ENCODE measurements at regions of chr7 and their contacts with region 1.

Region 1: GRCh38 chr7:45033261-45033930 is 33.4 kb downstream of the CCM2 start:
- DNase-seq: no peak
- ATAC-seq: peak; percentile 23
- H3K4me3 Mint-ChIP-seq: peak overlapping the region; percentile 65
- H3K27ac Mint-ChIP-seq: peak overlapping the region; percentile 75
- H3K4me1 Mint-ChIP-seq: peaks cover 72% of the 10 kb centered on the region
- H3K27me3 Mint-ChIP-seq: no peaks in the 10 kb centered on the region

Region 2: DNA sequence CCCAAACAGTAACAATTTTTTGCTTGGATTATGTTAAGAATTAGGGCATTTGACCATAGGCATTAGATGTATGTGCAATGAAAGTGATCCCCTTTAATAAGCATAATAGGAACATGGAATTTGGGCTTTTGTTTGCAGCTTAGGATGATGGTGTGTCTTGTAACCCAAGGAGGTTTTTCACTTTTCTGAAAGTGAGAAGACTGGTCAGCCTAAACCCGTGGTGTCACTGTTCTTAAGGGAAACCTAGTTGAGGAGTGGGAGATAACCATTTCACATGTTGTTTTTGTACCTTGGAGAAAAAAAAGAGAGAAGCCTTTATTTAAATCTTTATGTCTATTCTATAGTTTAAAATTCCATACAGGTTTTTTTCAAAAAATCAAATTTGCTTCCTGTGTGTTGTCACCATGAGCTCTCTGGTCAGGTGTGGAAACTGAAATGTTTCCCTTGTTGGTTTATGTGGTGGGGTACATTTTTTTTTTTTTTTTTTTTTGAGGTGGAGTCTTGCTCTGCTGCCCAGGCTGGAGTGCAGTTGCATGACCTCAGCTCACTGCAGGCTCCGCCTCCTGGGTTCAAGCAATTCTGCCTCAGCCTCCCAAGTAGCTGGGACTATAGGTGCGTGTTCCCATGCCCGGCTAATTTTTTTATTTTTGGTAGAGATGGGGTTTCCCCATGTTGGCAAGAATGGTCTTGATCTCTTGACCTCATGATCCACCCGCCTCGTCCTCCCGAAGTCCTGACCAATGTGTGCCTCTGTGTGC is 25.6 kb before region 1 on chr7:
- POLR2A ChIA-PET with region 1: interaction called, 80 read pairs
- DNase-seq: peak; percentile 47
- ATAC-seq: peak; percentile 75
- H3K4me3 Mint-ChIP-seq: peak overlapping the region; percentile 38
- H3K27ac Mint-ChIP-seq: peak overlapping the region; percentile 70
- H3K4me1 Mint-ChIP-seq: peaks cover 38% of the 10 kb centered on the region
- H3K27me3 Mint-ChIP-seq: no peaks in the 10 kb centered on the region

Region 3: DNA sequence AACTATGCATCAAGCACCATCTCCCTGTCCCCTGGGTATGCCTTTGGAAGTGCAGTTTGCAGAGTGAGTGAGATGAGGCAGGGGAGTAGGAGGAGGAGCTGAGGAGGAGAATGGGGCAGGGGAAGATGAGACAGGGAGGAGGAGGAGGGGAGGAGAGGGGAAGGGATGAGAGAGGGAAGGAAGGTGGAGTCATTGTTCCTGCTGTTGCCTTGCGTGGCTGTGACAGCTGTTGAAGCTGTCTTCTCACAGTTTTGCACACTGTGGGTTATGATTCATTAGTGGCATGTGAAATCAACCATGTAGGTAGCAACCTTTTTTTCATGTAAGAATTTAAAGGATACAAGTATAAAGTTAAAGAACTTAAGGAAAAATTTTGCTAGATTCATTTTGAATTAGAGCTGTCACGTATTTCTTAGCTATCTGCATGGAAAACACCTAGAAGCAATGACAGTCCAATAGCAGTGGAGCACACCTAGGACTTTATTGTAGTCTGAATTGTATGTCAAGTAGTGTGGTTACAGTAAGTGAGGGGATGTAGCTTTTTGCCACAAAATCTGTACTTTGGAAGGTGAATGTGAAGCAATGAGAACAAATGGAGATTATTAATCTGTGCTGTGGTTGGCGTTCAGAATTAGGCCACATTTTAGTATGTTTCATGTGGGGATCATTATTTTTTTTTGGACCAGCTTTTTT is 11.6 kb before region 1 on chr7:
- POLR2A ChIA-PET with region 1: interaction called, 23 read pairs
- DNase-seq: no peak
- ATAC-seq: peak; percentile 75
- H3K4me3 Mint-ChIP-seq: peak overlapping the region; percentile 18
- H3K27ac Mint-ChIP-seq: peak overlapping the region; percentile 83
- H3K4me1 Mint-ChIP-seq: peaks cover 35% of the 10 kb centered on the region
- H3K27me3 Mint-ChIP-seq: no peaks in the 10 kb centered on the region

Measured in activated naive CD8-positive, alpha-beta T cell treated with anti-CD3 and anti-CD28 coated beads, Interleukin-2, amount 10 ng/mL, durations not matched to agents 7 days and 5 days (primary cell).